ENCODE measurements at regions of chr21 and their contacts with region 1.

Region 1: DNA sequence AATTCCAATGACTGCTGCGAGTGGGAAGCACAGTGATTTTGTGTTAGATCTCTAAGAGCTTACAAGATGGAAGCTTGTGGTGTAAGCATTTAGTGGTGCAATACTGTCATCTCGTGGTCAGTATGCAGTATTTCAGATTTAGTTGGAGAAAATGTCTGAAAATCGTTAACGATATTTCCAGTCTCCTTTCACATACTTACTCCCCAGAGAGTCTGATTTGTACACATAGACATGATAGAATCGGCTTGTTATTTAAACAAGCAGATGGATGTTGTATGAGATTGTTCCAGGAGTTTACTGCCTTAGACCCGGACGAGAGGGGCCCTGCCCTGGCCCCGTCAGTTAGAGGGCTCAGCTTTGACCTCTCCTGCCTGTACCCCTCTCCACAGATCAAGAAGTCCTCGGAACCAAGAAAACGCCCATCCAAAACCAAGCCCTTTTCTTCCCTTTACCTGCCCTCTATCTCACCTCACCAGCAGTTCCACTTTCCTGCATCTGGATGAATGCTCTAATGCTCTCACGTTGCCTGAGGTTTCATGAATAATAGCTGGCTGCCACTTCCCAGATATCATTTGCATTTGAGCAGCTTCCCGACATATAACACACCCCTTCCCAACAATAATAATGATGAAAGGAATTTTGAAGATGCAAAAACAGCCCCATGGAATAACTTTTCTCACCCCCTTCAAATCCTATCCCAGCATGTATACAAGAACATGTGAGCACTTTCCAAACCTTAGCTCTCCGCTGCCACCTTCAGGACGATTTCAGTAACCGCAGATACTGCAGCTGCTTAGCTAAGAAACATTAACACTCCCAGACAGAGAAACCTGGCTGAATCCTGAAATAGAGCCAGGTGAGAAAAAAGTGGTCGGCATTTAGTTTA is 247.3 kb downstream of the LTN1 start:
- DNase-seq: no peak
- H3K4me3 ChIP-seq: peak overlapping the region; percentile 49 to 55 (median 52)
- H3K27ac ChIP-seq: peak overlapping the region; percentile 74 to 84 (median 79)
- H3K4me1 ChIP-seq: peaks cover 10 to 58% (median 52%) of the 10 kb centered on the region in 4 donors
- H3K27me3 ChIP-seq: no peaks in the 10 kb centered on the region
- CTCF ChIP-seq: peak; percentile 89 to 94 (median 91)
- EP300 ChIP-seq: peak; percentile 45
- POLR2A ChIP-seq: no peak

Region 2: GRCh38 chr21:26842976-26843932 is 1902.1 kb before region 1 on chr21:
- intact Hi-C with region 1: loop called (anchors 5 kb)
- DNase-seq: peak; percentile 98
- H3K4me3 ChIP-seq: peak overlapping the region; percentile 70 to 85 (median 78)
- H3K27ac ChIP-seq: peak overlapping the region; percentile 94 to 97 (median 96)
- H3K4me1 ChIP-seq: peaks cover 34 to 56% (median 52%) of the 10 kb centered on the region in 4 donors
- H3K27me3 ChIP-seq: no peaks in the 10 kb centered on the region
- CTCF ChIP-seq: peak; percentile 26 to 38 (median 28)
- EP300 ChIP-seq: no peak
- POLR2A ChIP-seq: peak; percentile 5

Region 3: DNA sequence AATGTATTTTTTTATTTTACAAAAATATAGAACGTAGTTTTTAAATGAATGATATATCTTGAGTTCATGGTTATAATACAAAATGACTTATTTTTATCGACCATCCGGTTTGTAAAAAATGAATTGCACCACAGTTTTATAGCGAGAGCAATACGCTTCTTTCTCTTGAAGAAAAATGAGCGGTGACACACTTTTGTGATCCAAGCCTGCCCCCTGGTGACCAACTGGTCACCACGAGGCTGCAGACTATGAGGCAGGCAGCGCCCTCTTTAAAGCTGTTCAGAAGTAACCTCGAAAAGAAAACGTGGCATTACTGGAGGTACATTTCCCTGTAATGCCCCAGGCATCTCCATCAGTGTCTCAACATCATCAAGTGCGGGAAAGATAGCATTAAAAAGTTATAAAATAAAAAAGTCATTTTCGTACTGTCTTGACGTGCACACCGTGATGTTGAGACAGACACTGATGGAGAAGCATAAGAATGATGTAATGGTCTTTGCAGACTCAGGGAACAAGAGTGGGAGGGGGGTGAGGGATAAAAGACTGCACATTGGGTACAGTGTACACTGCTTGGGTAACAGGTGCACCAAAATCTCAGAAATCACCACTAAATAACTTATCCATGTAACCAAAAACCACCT is 1044.3 kb before region 1 on chr21:
- intact Hi-C with region 1: loop called (anchors 10 kb)
- DNase-seq: no peak
- H3K4me3 ChIP-seq: no peak overlapping the region
- H3K27ac ChIP-seq: no peak overlapping the region
- H3K4me1 ChIP-seq: peaks cover 0 to 27% (median 4%) of the 10 kb centered on the region in 4 donors
- H3K27me3 ChIP-seq: no peaks in the 10 kb centered on the region
- CTCF ChIP-seq: peak; percentile 81 to 93 (median 93)
- EP300 ChIP-seq: no peak
- POLR2A ChIP-seq: no peak

Region 4: GRCh38 chr21:28074676-28075075 is 670.7 kb before region 1 on chr21:
- intact Hi-C with region 1: loop called (anchors 10 kb)
- DNase-seq: no peak
- H3K4me3 ChIP-seq: no peak overlapping the region
- H3K27ac ChIP-seq: no peak overlapping the region
- H3K4me1 ChIP-seq: peaks cover 0 to 10% (median 9%) of the 10 kb centered on the region in 4 donors
- H3K27me3 ChIP-seq: no peaks in the 10 kb centered on the region
- CTCF ChIP-seq: no peak
- EP300 ChIP-seq: no peak
- POLR2A ChIP-seq: no peak

Region 5: GRCh38 chr21:28516991-28517592 is 228.3 kb before region 1 on chr21:
- intact Hi-C with region 1: loop called (anchors 10 kb)
- DNase-seq: no peak
- H3K4me3 ChIP-seq: no peak overlapping the region
- H3K27ac ChIP-seq: no peak overlapping the region
- H3K4me1 ChIP-seq: peaks cover 10 to 18% (median 13%) of the 10 kb centered on the region in 4 donors
- H3K27me3 ChIP-seq: no peaks in the 10 kb centered on the region
- CTCF ChIP-seq: peak; percentile 36 to 68 (median 43)
- EP300 ChIP-seq: no peak
- POLR2A ChIP-seq: no peak

Region 6: DNA sequence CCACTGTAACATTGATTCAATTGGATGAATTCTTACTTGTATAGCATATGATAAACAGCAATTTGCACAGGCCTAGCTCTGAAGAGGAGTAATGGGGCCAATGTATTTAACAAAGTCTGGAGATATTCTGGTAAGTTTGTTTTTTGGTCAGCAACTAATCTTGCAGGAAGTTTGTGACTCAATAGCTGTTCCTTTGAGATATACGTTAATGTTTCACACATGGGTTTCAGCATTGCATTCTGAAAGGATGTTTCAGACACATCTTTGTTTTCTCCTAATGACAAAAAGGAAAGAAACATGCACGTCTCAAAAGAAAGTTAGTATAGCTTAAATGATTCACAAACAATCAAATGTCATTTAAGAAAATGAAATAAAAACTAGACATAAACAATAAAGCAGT is 198.3 kb after region 1 on chr21:
- intact Hi-C with region 1: loop called (anchors 5 kb)
- DNase-seq: no peak
- H3K4me3 ChIP-seq: no peak overlapping the region
- H3K27ac ChIP-seq: no peak overlapping the region
- H3K4me1 ChIP-seq: peaks cover 3 to 49% (median 37%) of the 10 kb centered on the region in 4 donors
- H3K27me3 ChIP-seq: no peaks in the 10 kb centered on the region
- CTCF ChIP-seq: no peak
- EP300 ChIP-seq: no peak
- POLR2A ChIP-seq: no peak